T-cell (primary cell): ENCODE measurements at regions of chr6 and their contacts with region 1.

Region 1: GRCh38 chr6:140346461-140346860 is 972.0 kb upstream of the CITED2 start:
- DNase-seq: no peak
- ATAC-seq: no peak
- H3K4me3 ChIP-seq: no peak overlapping the region
- H3K4me3 Mint-ChIP-seq: no peak overlapping the region
- H3K27ac ChIP-seq: no peak overlapping the region
- H3K27ac Mint-ChIP-seq: no peak overlapping the region
- H3K4me1 ChIP-seq: no peaks in the 10 kb centered on the region
- H3K4me1 Mint-ChIP-seq: no peaks in the 10 kb centered on the region
- H3K27me3 ChIP-seq: no peaks in the 10 kb centered on the region
- H3K27me3 Mint-ChIP-seq: peaks cover 4 to 6% of the 10 kb centered on the region in 2 donors

Region 2: DNA sequence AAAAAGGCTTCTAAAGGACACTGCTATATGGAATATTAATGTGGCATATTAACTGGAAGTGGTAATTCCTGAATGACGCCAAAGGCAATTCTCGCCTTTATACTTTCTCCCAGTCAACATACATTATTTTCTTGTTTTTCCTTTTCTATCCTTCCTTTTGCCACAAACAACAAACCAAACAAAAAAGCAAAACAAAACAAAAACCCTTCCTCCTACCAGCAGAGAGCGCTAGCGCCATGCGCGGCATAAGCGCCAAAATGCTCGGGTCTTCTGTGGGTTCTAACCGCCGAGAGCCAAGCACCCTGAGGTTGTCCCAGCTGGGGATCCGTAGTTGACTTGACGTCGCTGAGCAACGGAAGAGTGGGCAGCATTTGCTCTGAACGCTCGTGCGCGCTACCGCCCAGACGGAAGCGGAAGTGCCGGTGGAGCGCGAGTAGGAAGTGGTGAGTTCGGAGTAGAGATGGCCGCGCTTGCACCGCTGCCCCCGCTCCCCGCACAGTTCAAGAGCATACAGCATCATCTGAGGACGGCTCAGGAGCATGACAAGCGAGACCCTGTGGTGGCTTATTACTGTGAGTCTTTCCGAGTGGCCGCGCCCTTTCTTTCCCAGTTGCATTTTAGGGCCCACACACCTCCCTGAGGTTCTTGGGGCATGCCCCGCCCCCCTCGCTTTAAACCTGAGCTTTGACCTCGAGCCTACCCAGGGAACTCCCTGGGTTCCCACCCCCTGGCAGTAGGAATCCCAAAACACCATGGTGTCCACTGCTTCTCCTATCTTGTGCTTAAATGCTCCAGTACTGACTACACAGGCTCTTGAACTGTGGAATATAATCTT is 1800.6 kb after region 1 on chr6 and contains the starts of genes NMBR and VTA1:
- CTCF ChIA-PET with region 1: no interaction called
- POLR2A ChIA-PET with region 1: interaction called in 1 of 2 experiments, 10 read pairs
- DNase-seq: peak; percentile 84 to 99 (median 97)
- ATAC-seq: peak; percentile 93 to 97 (median 97)
- H3K4me3 ChIP-seq: peak within 1 kb of the TSS; percentile 94 to 96
- H3K4me3 Mint-ChIP-seq: peak within 1 kb of the TSS; percentile 94 to 97 (median 95)
- H3K27ac ChIP-seq: peak within 1 kb of the TSS; percentile 68
- H3K27ac Mint-ChIP-seq: peak within 1 kb of the TSS; percentile 93
- H3K4me1 ChIP-seq: peaks cover 4 to 20% of the 10 kb centered on the region in 2 experiments
- H3K4me1 Mint-ChIP-seq: peaks cover 62 to 68% (median 62%) of the 10 kb centered on the region in 3 donors
- H3K27me3 ChIP-seq: no peaks in the 10 kb centered on the region
- H3K27me3 Mint-ChIP-seq: no peaks in the 10 kb centered on the region
- total RNA-seq, gene NMBR: not detected
- total RNA-seq, gene VTA1: 19.2 to 31.5 (median 29.0) TPM